ENCODE measurements at regions of chr3 and their contacts with region 1.

Region 1: GRCh38 chr3:183122257-183122932 is 23.1 kb upstream of the MCCC1 start:
- DNase-seq: no peak
- H3K4me3 Mint-ChIP-seq: no peak overlapping the region
- H3K27ac Mint-ChIP-seq: no peak overlapping the region
- H3K4me1 Mint-ChIP-seq: peaks cover 12% of the 10 kb centered on the region
- H3K27me3 Mint-ChIP-seq: peaks cover 6% of the 10 kb centered on the region

Region 2: DNA sequence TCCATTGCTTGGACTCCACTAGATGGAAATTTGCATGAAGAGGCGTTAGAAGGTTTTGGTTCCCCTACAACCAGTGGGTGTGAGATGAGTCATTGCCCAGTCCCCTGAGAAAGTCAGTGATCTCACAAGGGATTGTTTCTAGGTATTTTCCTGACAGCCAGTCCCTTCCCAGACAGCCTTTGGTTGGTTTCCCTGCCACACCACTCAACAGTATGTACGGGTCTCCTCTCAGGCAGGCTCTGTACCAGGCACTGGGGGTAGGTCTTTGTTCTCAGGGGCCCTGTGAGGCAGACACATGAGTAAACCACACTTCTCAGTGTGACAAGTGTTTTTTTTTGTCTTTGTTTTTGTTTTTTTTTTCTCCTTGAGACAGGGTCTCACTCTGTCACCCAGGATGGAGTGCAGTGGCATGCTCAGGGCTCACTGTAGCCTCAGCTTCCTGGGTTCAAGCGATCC is 36.2 kb after region 1 on chr3:
- intact Hi-C with region 1: loop called (anchors 1 kb)
- DNase-seq: peak; percentile 33
- H3K4me3 Mint-ChIP-seq: peak overlapping the region; percentile 45
- H3K27ac Mint-ChIP-seq: peak overlapping the region; percentile 73
- H3K4me1 Mint-ChIP-seq: peaks cover 48% of the 10 kb centered on the region
- H3K27me3 Mint-ChIP-seq: no peaks in the 10 kb centered on the region

Region 3: GRCh38 chr3:183252973-183253901 is 130.8 kb after region 1 on chr3 and contains the start of gene B3GNT5:
- intact Hi-C with region 1: loop called (anchors 1 kb)
- DNase-seq: peak; percentile 11
- H3K4me3 Mint-ChIP-seq: peak within 1 kb of the TSS; percentile 81
- H3K27ac Mint-ChIP-seq: peak within 1 kb of the TSS; percentile 52
- H3K4me1 Mint-ChIP-seq: peaks cover 18% of the 10 kb centered on the region
- H3K27me3 Mint-ChIP-seq: peaks cover 10% of the 10 kb centered on the region
- total RNA-seq, gene B3GNT5: 17.0 and 17.7 TPM in 2 replicates

Region 4: DNA sequence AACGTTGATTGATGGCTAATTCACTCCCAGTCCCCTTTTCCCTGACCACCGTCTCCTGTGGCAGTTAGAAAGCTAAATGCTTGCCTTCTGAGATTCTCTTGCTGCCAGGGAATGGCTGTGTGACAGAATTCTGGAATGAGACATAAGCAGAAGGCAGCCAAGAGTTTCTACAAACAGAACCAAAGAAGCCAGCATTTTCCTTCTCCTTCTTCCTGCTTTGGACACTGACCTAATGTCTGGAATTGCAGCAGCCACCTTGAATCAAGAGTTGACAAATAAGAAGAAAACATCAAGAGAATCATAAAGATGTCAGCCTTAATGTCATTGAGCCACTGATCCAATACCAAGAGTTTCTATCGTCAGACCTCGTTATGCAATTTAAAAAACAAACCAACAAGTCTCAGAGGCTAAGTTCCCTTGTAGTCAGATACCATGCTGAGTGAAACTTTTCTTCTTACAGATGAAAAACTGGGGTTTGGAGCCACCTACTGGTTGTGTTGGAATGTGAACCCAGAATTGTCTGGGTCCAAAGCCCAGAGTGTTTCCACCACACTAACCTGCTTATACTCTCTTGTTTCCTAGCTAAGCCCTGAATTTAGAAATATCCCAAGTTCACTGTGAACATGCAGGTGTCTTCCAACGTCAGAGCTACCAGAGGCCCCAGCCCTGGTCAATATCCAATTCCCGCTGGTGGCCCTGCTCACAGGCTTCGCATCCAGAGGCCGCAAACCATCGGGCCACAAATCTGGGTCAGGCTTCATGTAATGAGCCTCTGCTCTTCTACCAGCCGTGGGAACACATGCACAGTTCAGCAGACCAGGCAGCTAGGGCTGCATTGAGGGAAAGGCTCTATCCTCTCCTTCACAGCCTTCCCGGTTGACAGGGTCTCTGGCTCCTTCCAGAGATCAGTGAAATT is 263.6 kb after region 1 on chr3:
- intact Hi-C with region 1: loop called (anchors 1 kb)
- DNase-seq: peak; percentile 40
- H3K4me3 Mint-ChIP-seq: no peak overlapping the region
- H3K27ac Mint-ChIP-seq: no peak overlapping the region
- H3K4me1 Mint-ChIP-seq: peaks cover 11% of the 10 kb centered on the region
- H3K27me3 Mint-ChIP-seq: no peaks in the 10 kb centered on the region